CD8-positive, alpha-beta T cell (primary cell): ENCODE measurements at regions of chr1 and their contacts with region 1.

Region 1: DNA sequence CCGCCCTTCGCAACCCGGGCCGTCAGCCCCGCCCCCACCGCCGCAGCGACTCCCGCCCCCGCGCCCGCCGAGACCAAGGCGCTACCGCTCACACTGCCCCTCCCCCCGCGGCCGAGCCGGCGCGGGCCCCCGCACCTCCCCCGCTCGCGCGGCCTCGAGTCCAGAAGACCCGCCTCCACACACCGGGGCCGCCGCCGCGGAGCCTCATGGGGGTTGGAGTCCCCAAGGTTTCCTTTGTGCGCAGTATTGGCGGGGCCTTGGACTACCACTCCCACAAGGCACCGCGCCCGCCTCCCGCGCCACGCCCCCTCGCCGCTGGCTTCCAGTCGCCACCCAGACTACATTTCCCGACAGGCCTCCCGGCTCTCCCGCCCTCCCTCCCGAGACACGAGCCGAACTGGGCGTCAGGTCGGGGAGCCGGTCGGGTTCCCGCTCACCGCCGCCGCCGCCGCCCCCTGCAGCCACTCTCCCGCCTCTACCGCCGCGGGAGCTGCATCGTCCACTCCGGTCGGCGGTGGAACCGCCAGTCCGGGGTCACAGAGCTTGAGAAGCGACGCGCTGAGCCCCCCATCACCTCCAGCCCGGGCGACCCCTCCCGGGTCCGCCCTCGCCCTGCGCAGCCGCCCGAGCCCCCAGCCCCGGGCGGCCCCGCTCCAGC is at the start of gene PHF13:
- DNase-seq: peak; percentile 98 to 100 (median 99)
- ATAC-seq: peak; percentile 93
- H3K4me3 ChIP-seq: peak within 1 kb of the TSS; percentile 70 to 72
- H3K4me3 Mint-ChIP-seq: peak within 1 kb of the TSS; percentile 90
- H3K27ac ChIP-seq: peak within 1 kb of the TSS; percentile 9 to 55
- H3K27ac Mint-ChIP-seq: peak within 1 kb of the TSS; percentile 86
- H3K4me1 ChIP-seq: peaks cover 18% of the 10 kb centered on the region
- H3K4me1 Mint-ChIP-seq: peaks cover 31% of the 10 kb centered on the region
- H3K27me3 ChIP-seq: no peaks in the 10 kb centered on the region
- H3K27me3 Mint-ChIP-seq: no peaks in the 10 kb centered on the region
- CTCF ChIP-seq: no peak
- total RNA-seq, gene PHF13: 3.3 to 3.5 TPM

Region 2: DNA sequence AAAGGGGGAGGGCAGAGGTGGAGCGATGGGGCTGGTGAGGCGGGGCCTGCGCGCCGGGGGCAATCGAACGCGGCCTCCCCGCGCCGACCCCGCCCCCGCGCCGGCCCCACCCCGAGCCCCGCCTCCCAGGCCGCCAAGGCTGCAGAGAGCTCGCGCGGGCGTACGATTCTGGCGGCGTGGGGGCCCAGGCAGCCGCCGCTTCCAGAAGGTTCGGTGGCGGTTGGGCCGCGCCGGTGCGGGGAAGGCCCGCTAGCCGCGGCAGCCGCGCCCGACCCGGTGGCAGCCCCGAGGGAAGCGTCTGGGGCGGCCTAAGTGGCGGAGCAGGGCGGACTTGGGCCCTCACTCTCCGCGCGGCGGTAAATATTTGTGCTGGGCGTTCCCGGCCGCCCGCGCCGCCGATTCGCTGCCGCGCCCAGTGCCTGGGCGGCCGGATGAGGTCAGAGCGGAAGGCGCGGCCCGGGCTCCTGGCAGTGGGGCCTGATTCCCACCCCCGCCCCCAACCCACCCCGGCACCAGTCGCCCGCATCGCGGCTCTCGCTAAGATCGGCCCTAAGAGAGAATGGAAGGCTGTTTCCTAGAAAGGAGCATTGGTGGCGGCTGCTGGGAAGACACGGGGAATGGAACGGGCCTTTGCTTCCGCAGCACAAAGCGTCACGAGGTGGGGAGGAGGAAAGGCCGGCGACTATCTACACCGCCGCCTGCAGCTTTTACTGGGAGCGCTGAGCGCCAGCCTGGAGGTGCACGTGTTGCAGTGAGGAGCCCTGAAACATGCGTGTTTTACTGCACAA is 219.9 kb before region 1 on chr1 and contains the start of gene ACOT7:
- CTCF ChIA-PET with region 1: no interaction called
- POLR2A ChIA-PET with region 1: no interaction called
- intact Hi-C with region 1: no loop called
- DNase-seq: peak; percentile 79 to 94 (median 89)
- ATAC-seq: peak; percentile 93
- H3K4me3 ChIP-seq: peak within 1 kb of the TSS; percentile 33 to 62
- H3K4me3 Mint-ChIP-seq: peak within 1 kb of the TSS; percentile 88
- H3K27ac ChIP-seq: peak within 1 kb of the TSS; percentile 54 to 88
- H3K27ac Mint-ChIP-seq: peak within 1 kb of the TSS; percentile 90
- H3K4me1 ChIP-seq: peaks cover 15% of the 10 kb centered on the region
- H3K4me1 Mint-ChIP-seq: peaks cover 24% of the 10 kb centered on the region
- H3K27me3 ChIP-seq: no peaks in the 10 kb centered on the region
- H3K27me3 Mint-ChIP-seq: no peaks in the 10 kb centered on the region
- CTCF ChIP-seq: no peak
- total RNA-seq, gene ACOT7: 2.8 to 3.1 TPM

Region 3: DNA sequence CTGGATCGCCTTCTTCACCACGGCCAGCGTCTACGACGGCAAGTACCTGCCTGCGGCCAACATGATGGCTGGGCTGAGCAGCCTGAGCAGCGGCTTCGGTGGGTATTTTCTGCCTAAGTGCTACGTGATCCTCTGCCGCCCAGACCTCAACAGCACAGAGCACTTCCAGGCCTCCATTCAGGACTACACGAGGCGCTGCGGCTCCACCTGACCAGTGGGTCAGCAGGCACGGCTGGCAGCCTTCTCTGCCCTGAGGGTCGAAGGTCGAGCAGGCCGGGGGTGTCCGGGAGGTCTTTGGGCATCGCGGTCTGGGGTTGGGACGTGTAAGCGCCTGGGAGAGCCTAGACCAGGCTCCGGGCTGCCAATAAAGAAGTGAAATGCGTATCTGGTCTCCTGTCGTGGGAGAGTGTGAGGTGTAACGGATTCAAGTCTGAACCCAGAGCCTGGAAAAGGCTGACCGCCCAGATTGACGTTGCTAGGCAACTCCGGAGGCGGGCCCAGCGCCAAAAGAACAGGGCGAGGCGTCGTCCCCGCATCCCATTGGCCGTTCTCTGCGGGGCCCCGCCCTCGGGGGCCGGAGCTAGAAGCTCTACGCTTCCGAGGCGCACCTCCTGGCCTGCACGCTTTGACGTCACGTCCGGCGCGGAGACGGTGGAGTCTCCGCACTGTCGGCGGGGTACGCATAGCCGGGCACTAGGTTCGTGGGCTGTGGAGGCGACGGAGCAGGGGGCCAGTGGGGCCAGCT is 33.9 kb before region 1 on chr1 and contains the start of gene ZBTB48:
- CTCF ChIA-PET with region 1: interaction called, 3 read pairs
- POLR2A ChIA-PET with region 1: interaction called, 5 read pairs
- intact Hi-C with region 1: loop called (anchors 1 kb)
- DNase-seq: peak; percentile 91 to 98 (median 97)
- ATAC-seq: peak; percentile 98
- H3K4me3 ChIP-seq: peak within 1 kb of the TSS; percentile 90 to 97
- H3K4me3 Mint-ChIP-seq: peak within 1 kb of the TSS; percentile 97
- H3K27ac ChIP-seq: peak within 1 kb of the TSS; percentile 94
- H3K27ac Mint-ChIP-seq: peak within 1 kb of the TSS; percentile 98
- H3K4me1 ChIP-seq: peaks cover 31% of the 10 kb centered on the region
- H3K4me1 Mint-ChIP-seq: peaks cover 38% of the 10 kb centered on the region
- H3K27me3 ChIP-seq: no peaks in the 10 kb centered on the region
- H3K27me3 Mint-ChIP-seq: no peaks in the 10 kb centered on the region
- CTCF ChIP-seq: no peak
- total RNA-seq, gene ZBTB48: 31.9 to 35.0 TPM